Activated naive CD4-positive, alpha-beta T cell treated with anti-CD3 and anti-CD28 coated beads for 36 hours (primary cell): ENCODE measurements at regions of chr1 and their contacts with region 1.

Region 1: GRCh38 chr1:214439352-214440119 is 111.9 kb downstream of the PTPN14 start:
- DNase-seq: peak; percentile 85
- H3K4me3 Mint-ChIP-seq: peak overlapping the region; percentile 16
- H3K27ac Mint-ChIP-seq: peak overlapping the region; percentile 93
- H3K4me1 Mint-ChIP-seq: peaks cover 49% of the 10 kb centered on the region
- H3K27me3 Mint-ChIP-seq: peaks cover 2% of the 10 kb centered on the region

Region 2: DNA sequence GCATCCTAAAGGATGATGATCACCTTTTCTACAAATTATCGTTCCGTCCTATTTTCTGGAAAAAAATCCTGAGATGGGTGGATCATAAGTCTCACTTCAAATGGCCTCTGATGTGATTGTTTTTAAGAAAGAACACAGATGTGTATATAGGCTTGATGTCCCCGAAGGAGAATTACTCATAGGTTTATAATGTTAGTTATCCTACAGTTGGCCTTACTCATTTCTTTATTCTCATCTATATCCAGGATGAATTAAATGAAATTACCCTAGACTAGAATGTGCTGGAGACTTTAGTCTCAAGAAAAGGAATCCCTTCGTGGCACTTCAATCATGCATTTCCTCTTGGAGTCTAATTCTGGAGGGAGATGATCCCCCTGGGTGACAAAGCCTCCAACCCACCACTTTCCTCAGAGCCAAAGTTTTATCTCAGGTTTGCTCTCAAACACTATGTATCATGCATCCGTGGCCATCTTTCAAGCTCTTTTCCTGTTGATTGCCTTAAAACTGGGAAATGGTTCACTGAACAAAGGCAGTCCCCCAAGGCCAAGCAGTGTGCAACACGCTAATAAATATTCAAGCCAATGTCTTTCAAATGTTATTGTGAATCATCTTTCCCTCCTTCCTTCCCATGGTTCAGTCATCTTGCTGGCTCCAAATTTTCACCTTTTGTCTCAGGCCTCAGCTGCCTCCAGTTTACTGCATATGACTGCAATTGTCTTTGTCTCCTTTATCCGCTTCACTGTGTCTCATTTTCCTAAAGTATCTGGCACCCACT is 191.0 kb before region 1 on chr1:
- CTCF ChIA-PET with region 1: no interaction called
- intact Hi-C with region 1: no loop called
- DNase-seq: no peak
- H3K4me3 Mint-ChIP-seq: no peak overlapping the region
- H3K27ac Mint-ChIP-seq: no peak overlapping the region
- H3K4me1 Mint-ChIP-seq: no peaks in the 10 kb centered on the region
- H3K27me3 Mint-ChIP-seq: peaks cover 2% of the 10 kb centered on the region

Region 3: GRCh38 chr1:214386747-214387146 is 52.8 kb before region 1 on chr1:
- CTCF ChIA-PET with region 1: no interaction called
- intact Hi-C with region 1: loop called (anchors 2 kb)
- DNase-seq: no peak
- H3K4me3 Mint-ChIP-seq: no peak overlapping the region
- H3K27ac Mint-ChIP-seq: no peak overlapping the region
- H3K4me1 Mint-ChIP-seq: no peaks in the 10 kb centered on the region
- H3K27me3 Mint-ChIP-seq: no peaks in the 10 kb centered on the region

Region 4: GRCh38 chr1:214427871-214428277 is 11.7 kb before region 1 on chr1:
- CTCF ChIA-PET with region 1: no interaction called
- intact Hi-C with region 1: loop called (anchors 1 kb)
- DNase-seq: peak; percentile 89
- H3K4me3 Mint-ChIP-seq: peak overlapping the region; percentile 41
- H3K27ac Mint-ChIP-seq: peak overlapping the region; percentile 90
- H3K4me1 Mint-ChIP-seq: peaks cover 26% of the 10 kb centered on the region
- H3K27me3 Mint-ChIP-seq: no peaks in the 10 kb centered on the region

Region 5: GRCh38 chr1:214566158-214567104 is 126.9 kb after region 1 on chr1:
- CTCF ChIA-PET with region 1: no interaction called
- intact Hi-C with region 1: loop called (anchors 1 kb)
- DNase-seq: peak; percentile 55
- H3K4me3 Mint-ChIP-seq: no peak overlapping the region
- H3K27ac Mint-ChIP-seq: peak overlapping the region; percentile 36
- H3K4me1 Mint-ChIP-seq: peaks cover 10% of the 10 kb centered on the region
- H3K27me3 Mint-ChIP-seq: peaks cover 7% of the 10 kb centered on the region

Region 6: GRCh38 chr1:214602764-214603657 is 163.5 kb after region 1 on chr1 and contains the start of gene CENPF:
- CTCF ChIA-PET with region 1: no interaction called
- intact Hi-C with region 1: loop called (anchors 1 kb)
- DNase-seq: peak; percentile 97
- H3K4me3 Mint-ChIP-seq: peak within 1 kb of the TSS; percentile 97
- H3K27ac Mint-ChIP-seq: peak within 1 kb of the TSS; percentile 90
- H3K4me1 Mint-ChIP-seq: peaks cover 8% of the 10 kb centered on the region
- H3K27me3 Mint-ChIP-seq: no peaks in the 10 kb centered on the region
- total RNA-seq, gene CENPF: 116 to 128 TPM

Region 7: DNA sequence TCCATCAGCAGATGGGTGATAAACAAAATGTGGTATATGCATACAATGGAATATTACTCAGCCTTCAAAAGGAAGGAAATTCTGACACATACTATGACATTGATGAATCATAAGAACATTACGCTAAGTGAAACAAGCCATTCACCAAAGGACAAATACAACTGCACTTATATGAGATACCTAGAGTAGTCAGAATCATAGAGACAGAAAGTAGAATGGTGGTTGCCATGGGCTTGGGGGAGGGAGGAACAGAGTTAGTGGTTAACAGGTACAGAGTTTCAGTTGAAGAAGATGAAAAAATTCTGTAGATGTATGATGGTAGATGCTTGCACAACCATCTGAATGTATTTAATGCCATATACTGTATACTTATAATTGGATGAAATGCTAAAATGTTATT is 603.9 kb after region 1 on chr1:
- CTCF ChIA-PET with region 1: no interaction called
- intact Hi-C with region 1: loop called (anchors 5 kb)
- DNase-seq: peak; percentile 51
- H3K4me3 Mint-ChIP-seq: no peak overlapping the region
- H3K27ac Mint-ChIP-seq: no peak overlapping the region
- H3K4me1 Mint-ChIP-seq: peaks cover 3% of the 10 kb centered on the region
- H3K27me3 Mint-ChIP-seq: peaks cover 23% of the 10 kb centered on the region